K562 (cell line): ENCODE measurements at regions of chr3 and their contacts with region 1.

Region 1: GRCh38 chr3:44712455-44713075 is at the start of gene ZNF502:
- DNase-seq: peak; percentile 44 to 76 (median 64)
- ATAC-seq: peak; percentile 99
- H3K4me3 ChIP-seq: peak within 1 kb of the TSS; percentile 46
- H3K27ac ChIP-seq: no peak within 1 kb of the TSS; the same call in 2 of the 3 replicates
- H3K4me1 ChIP-seq: peaks cover 0 to 7% of the 10 kb centered on the region in 2 experiments; a peak in 1 of 5 replicates
- H3K27me3 ChIP-seq: peaks cover 14 to 25% of the 10 kb centered on the region in 2 experiments; a peak in 4 of 5 replicates
- CTCF ChIP-seq: peak; percentile 30 to 44 (median 34); a peak in 5 of 6 replicates
- EP300 ChIP-seq: no peak
- POLR2A ChIP-seq: no peak
- RAD21 ChIP-seq: no peak
- polyA plus RNA-seq, gene ZNF502: 0.38 to 0.67 TPM

Region 2: GRCh38 chr3:44529927-44530326 is 182.6 kb before region 1 on chr3:
- CTCF ChIA-PET with region 1: no interaction called
- POLR2A ChIA-PET with region 1: no interaction called
- in situ Hi-C with region 1: no loop called
- intact Hi-C with region 1: loop called (anchors 10 kb)
- DNase-seq: peak in 1 of 4 experiments; percentile 37
- ATAC-seq: peak; percentile 76
- H3K4me3 ChIP-seq: no peak overlapping the region
- H3K27ac ChIP-seq: no peak overlapping the region
- H3K4me1 ChIP-seq: peaks cover 0 to 3% of the 10 kb centered on the region in 2 experiments; a peak in 1 of 5 replicates
- H3K27me3 ChIP-seq: peaks cover 0 to 8% of the 10 kb centered on the region in 2 experiments; a peak in 2 of 5 replicates
- CTCF ChIP-seq: peak; percentile 33 to 48 (median 43); a peak in 4 of 6 replicates
- EP300 ChIP-seq: no peak
- POLR2A ChIP-seq: no peak
- RAD21 ChIP-seq: peak in 1 of 2 experiments; percentile 34; a peak in 2 of 4 replicates

Region 3: GRCh38 chr3:44729384-44729910 is 16.9 kb after region 1 on chr3 and contains the start of gene ZNF501:
- CTCF ChIA-PET with region 1: no interaction called
- POLR2A ChIA-PET with region 1: interaction called, 6 read pairs
- in situ Hi-C with region 1: no loop called
- intact Hi-C with region 1: loop called (anchors 1 kb)
- DNase-seq: peak; percentile 92 to 96 (median 94)
- ATAC-seq: peak; percentile 100
- H3K4me3 ChIP-seq: peak within 1 kb of the TSS; percentile 62
- H3K27ac ChIP-seq: peak within 1 kb of the TSS; percentile 52
- H3K4me1 ChIP-seq: peaks cover 0 to 6% of the 10 kb centered on the region in 2 experiments; a peak in 2 of 5 replicates
- H3K27me3 ChIP-seq: no peaks in the 10 kb centered on the region
- CTCF ChIP-seq: peak in 1 of 3 experiments; percentile 8; a peak in 1 of 6 replicates
- EP300 ChIP-seq: peak; percentile 37
- POLR2A ChIP-seq: peak; percentile 89
- RAD21 ChIP-seq: 0 out of 4 replicates have a peak, but pooled peaks of 1 of the 2 experiments have one; percentile 13
- polyA plus RNA-seq, gene ZNF501: 1.2 to 1.6 TPM